ENCODE measurements at regions of chr20 and their contacts with region 1.

Region 1: GRCh38 chr20:21808863-21809664 is 103.6 kb downstream of the PAX1 start:
- DNase-seq: peak in 6 of 7 donors; percentile 44 to 66 (median 54)
- H3K4me3 ChIP-seq: no peak overlapping the region
- H3K27ac ChIP-seq: no peak overlapping the region
- H3K4me1 ChIP-seq: no peaks in the 10 kb centered on the region
- H3K27me3 ChIP-seq: no peaks in the 10 kb centered on the region
- CTCF ChIP-seq: peak; percentile 24 to 81 (median 64)
- POLR2A ChIP-seq: no peak

Region 2: DNA sequence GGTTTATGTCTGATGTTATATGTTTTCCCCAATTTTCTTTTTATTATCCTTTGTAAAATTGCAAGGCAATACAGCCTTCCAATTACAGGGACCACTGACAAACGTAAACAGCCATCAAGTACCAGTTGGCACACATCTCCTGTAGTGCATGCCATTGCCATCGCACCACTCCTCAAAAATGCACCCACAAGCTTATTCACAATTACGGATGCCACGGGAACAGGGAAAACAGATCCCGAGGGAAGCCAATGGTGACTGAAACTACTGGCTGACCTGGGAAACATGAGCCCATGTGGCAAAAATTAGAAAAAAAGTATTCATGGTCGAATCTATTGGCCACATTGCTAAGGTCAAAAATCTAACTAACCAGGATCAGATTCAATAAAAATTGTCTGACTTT is 291.6 kb after region 1 on chr20:
- intact Hi-C with region 1: loop called in 1 of 2 experiments (anchors 5 kb)
- DNase-seq: no peak
- H3K4me3 ChIP-seq: no peak overlapping the region
- H3K27ac ChIP-seq: no peak overlapping the region
- H3K4me1 ChIP-seq: no peaks in the 10 kb centered on the region
- H3K27me3 ChIP-seq: no peaks in the 10 kb centered on the region
- CTCF ChIP-seq: no peak
- POLR2A ChIP-seq: no peak